Esophagus muscularis mucosa (tissue), 4 donors: ENCODE measurements at regions of chr13 and their contacts with region 1.

Region 1: DNA sequence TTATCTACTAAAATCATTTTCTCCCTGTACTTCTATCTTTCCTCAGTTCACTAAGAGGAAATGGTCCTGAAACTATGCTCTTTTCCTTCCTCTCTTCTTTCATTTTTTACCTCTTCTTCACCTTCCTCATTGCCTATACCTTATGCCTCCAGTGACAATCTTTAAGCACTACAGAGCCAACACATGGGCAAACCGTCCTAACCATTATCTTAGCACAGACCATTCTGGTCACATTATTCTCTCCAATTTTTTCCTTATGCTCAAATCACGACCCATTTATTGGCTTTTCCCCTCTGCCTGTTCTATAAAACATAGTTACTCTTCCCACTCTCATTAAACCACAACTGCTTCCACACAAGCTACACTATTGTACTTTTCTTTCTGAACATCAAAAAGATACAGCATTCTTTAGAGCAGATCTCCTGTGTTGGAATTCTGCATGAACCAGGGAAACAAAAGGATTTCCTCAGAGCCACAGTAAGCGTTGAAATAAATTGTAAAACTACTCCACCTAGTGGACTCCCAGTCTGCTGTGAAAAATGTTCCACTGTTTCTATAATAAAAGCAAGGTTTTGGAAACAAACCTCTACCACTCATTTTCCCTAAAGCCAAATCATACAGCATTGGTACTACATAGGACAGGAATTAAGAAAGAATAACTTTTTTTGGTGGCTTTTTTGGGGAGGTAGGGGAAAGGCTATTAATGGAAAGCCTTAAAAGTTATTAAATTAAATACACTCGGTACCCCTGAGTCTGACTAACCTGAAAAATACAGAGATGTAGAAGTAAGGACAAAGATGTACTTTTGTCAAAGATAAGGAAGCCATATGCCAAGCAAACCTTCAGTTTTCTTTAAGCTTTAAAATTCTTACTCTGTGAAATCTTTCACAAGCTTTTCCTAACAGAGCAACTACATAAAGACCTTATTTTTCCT is 19.5 kb downstream of the NUFIP1 start:
- DNase-seq: no peak
- H3K4me3 ChIP-seq: no peak overlapping the region
- H3K27ac ChIP-seq: peak overlapping the region; percentile 68 to 80 (median 78)
- H3K4me1 ChIP-seq: peaks cover 16 to 45% (median 30%) of the 10 kb centered on the region in 4 donors
- H3K27me3 ChIP-seq: no peaks in the 10 kb centered on the region
- CTCF ChIP-seq: peak; percentile 82 to 90 (median 85)
- EP300 ChIP-seq: no peak
- POLR2A ChIP-seq: no peak

Region 2: GRCh38 chr13:44484562-44485138 is 485.2 kb before region 1 on chr13:
- intact Hi-C with region 1: loop called (anchors 2 kb)
- DNase-seq: no peak
- H3K4me3 ChIP-seq: peak overlapping the region in 1 of 4 donors; percentile 19
- H3K27ac ChIP-seq: no peak overlapping the region
- H3K4me1 ChIP-seq: peaks cover 5 to 18% (median 15%) of the 10 kb centered on the region in 4 donors
- H3K27me3 ChIP-seq: no peaks in the 10 kb centered on the region
- CTCF ChIP-seq: no peak
- EP300 ChIP-seq: no peak
- POLR2A ChIP-seq: no peak

Region 3: DNA sequence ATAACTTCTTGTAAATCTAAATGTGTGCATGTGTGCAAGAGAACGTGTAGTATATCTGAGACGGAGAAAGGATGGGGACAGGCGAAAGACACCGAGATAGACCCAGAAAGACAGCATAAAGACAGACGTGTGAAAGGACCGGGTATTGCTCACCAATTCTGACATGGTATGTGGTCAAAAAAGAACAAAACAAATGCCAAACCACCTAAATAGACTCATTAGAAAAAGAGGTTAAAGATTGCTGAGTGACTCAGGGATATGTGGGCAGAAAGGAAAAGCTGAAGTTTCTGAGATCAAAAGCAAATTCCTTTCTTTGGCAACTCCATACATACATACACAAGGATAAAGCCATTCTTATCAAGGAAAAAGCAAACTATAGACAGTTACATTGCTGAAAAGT is 213.9 kb before region 1 on chr13:
- intact Hi-C with region 1: no loop called
- DNase-seq: no peak
- H3K4me3 ChIP-seq: no peak overlapping the region
- H3K27ac ChIP-seq: no peak overlapping the region
- H3K4me1 ChIP-seq: peaks cover 7 to 23% (median 17%) of the 10 kb centered on the region in 4 donors
- H3K27me3 ChIP-seq: no peaks in the 10 kb centered on the region
- CTCF ChIP-seq: no peak
- EP300 ChIP-seq: no peak
- POLR2A ChIP-seq: no peak

Region 4: GRCh38 chr13:44768239-44768638 is 201.6 kb before region 1 on chr13:
- intact Hi-C with region 1: no loop called
- DNase-seq: no peak
- H3K4me3 ChIP-seq: no peak overlapping the region
- H3K27ac ChIP-seq: no peak overlapping the region
- H3K4me1 ChIP-seq: peaks cover 5 to 10% (median 8%) of the 10 kb centered on the region in 4 donors
- H3K27me3 ChIP-seq: no peaks in the 10 kb centered on the region
- CTCF ChIP-seq: no peak
- EP300 ChIP-seq: no peak
- POLR2A ChIP-seq: no peak

Region 5: GRCh38 chr13:44778766-44779484 is 190.9 kb before region 1 on chr13:
- intact Hi-C with region 1: no loop called
- DNase-seq: no peak
- H3K4me3 ChIP-seq: no peak overlapping the region
- H3K27ac ChIP-seq: no peak overlapping the region
- H3K4me1 ChIP-seq: no peaks in the 10 kb centered on the region
- H3K27me3 ChIP-seq: no peaks in the 10 kb centered on the region
- CTCF ChIP-seq: no peak
- EP300 ChIP-seq: no peak
- POLR2A ChIP-seq: no peak

Region 6: GRCh38 chr13:44879463-44880058 is 90.3 kb before region 1 on chr13:
- intact Hi-C with region 1: no loop called
- DNase-seq: no peak
- H3K4me3 ChIP-seq: no peak overlapping the region
- H3K27ac ChIP-seq: no peak overlapping the region
- H3K4me1 ChIP-seq: peaks cover 0 to 8% (median 1%) of the 10 kb centered on the region in 4 donors
- H3K27me3 ChIP-seq: no peaks in the 10 kb centered on the region
- CTCF ChIP-seq: peak; percentile 21 to 42 (median 41)
- EP300 ChIP-seq: no peak
- POLR2A ChIP-seq: no peak

Region 7: DNA sequence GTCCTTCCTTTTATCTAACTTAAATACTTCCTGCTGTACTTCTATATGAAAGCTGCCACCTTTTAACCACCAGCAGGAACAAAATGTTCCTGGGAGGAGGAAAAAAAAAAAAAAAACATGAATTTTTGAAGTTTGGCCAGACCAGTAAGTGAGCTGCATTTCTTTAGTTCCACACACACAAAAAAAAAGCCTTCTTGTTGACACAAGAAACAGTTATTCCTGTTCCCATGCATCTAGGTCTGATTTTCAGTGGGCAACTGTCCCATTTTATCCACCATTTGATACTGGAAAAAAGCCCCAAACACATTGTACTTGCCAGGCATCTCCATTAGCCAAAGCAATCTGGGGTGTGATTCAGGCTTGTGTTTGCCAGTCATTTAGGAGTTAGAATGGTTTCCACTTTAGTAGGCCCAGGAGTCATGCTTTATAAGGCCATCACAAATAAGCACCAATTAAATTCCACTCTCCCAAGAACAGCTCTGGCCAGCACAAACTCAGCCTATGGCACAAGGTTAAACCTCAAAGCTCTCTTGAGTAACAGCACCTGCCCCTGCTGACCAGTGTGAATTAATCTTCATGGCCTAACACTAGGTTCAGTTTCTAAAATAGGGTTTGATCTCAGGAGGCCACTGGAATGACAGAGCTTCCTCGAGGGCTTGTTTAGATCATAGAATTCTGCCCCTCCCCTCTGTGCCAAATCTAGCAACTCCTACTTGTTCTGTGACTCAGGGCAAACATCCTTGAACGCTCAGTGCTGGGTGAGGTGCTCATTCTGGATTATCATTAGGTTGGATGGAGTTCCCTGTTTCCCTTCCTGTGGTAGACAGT is 47.7 kb before region 1 on chr13:
- intact Hi-C with region 1: loop called (anchors 5 kb)
- DNase-seq: peak; percentile 92
- H3K4me3 ChIP-seq: no peak overlapping the region
- H3K27ac ChIP-seq: peak overlapping the region; percentile 95 to 99 (median 96)
- H3K4me1 ChIP-seq: peaks cover 32 to 63% (median 57%) of the 10 kb centered on the region in 4 donors
- H3K27me3 ChIP-seq: no peaks in the 10 kb centered on the region
- CTCF ChIP-seq: no peak
- EP300 ChIP-seq: peak; percentile 69
- POLR2A ChIP-seq: no peak